SK-N-SH (cell line): ENCODE measurements at regions of chr11 and their contacts with region 1.

Region 1: DNA sequence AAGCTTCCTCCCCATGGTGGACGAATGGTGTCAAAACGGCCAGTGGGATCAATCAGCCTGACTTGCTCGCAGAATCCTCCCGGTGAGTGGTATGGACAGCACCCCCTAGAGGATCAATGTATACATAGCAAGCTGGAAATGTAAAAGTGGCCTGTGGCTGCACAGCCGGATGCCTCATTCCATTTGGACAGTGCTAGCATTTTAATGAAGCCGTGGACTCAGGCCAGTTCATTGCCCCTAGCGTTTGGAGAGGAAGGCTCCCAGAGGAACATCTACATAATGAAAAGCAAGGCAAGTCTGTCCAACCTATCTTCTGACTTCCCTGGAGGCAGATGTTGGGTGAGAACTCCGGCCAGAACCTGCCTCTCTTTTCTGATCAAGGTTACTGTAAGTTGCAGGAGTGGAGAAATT is 942.3 kb downstream of the NTM start:
- DNase-seq: peak; percentile 65
- H3K4me3 ChIP-seq: no peak overlapping the region; a peak in 1 of 4 replicates
- H3K27ac ChIP-seq: no peak overlapping the region
- H3K4me1 ChIP-seq: peaks cover 6 to 11% of the 10 kb centered on the region in 2 experiments; a peak in 2 of 4 replicates
- H3K27me3 ChIP-seq: no peaks in the 10 kb centered on the region
- CTCF ChIP-seq: peak; percentile 72
- EP300 ChIP-seq: no peak
- RAD21 ChIP-seq: peak; percentile 53

Region 2: DNA sequence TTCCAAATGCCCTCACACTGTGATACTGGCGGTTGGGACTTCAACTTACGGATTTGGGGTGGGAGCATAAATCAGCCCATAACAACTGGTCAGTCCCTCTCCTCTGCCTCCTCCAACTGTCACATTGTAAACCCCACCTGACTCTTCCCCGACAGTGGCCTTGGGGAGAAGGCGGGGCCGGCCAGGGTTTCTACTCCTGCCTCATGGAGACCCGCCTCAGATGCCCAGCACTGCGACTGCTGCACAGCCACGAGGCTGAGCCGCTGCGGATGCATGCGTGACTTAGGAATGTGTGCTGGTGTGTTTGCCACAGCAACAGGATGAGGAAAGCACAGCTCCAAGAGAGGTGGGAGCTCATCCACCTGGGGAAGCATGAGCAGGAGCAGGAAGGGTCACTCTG is 28.1 kb before region 1 on chr11:
- CTCF ChIA-PET with region 1: interaction called, 12 read pairs
- POLR2A ChIA-PET with region 1: no interaction called
- DNase-seq: no peak
- H3K4me3 ChIP-seq: no peak overlapping the region
- H3K27ac ChIP-seq: no peak overlapping the region
- H3K4me1 ChIP-seq: no peaks in the 10 kb centered on the region
- H3K27me3 ChIP-seq: no peaks in the 10 kb centered on the region
- CTCF ChIP-seq: no peak
- EP300 ChIP-seq: no peak
- RAD21 ChIP-seq: no peak

Region 3: GRCh38 chr11:132451942-132452601 is 139.4 kb after region 1 on chr11:
- CTCF ChIA-PET with region 1: no interaction called
- POLR2A ChIA-PET with region 1: no interaction called
- DNase-seq: no peak
- H3K4me3 ChIP-seq: no peak overlapping the region
- H3K27ac ChIP-seq: no peak overlapping the region
- H3K4me1 ChIP-seq: no peaks in the 10 kb centered on the region
- H3K27me3 ChIP-seq: no peaks in the 10 kb centered on the region
- CTCF ChIP-seq: no peak
- EP300 ChIP-seq: no peak
- RAD21 ChIP-seq: no peak